Activated naive CD4-positive, alpha-beta T cell treated with anti-CD3 and anti-CD28 coated beads for 36 hours (primary cell): ENCODE measurements at regions of chr9 and their contacts with region 1.

Region 1: GRCh38 chr9:112097712-112098688 is 77.1 kb downstream of the SUSD1 start:
- DNase-seq: peak; percentile 83
- H3K4me3 Mint-ChIP-seq: no peak overlapping the region
- H3K27ac Mint-ChIP-seq: no peak overlapping the region
- H3K4me1 Mint-ChIP-seq: peaks cover 16% of the 10 kb centered on the region
- H3K27me3 Mint-ChIP-seq: no peaks in the 10 kb centered on the region

Region 2: DNA sequence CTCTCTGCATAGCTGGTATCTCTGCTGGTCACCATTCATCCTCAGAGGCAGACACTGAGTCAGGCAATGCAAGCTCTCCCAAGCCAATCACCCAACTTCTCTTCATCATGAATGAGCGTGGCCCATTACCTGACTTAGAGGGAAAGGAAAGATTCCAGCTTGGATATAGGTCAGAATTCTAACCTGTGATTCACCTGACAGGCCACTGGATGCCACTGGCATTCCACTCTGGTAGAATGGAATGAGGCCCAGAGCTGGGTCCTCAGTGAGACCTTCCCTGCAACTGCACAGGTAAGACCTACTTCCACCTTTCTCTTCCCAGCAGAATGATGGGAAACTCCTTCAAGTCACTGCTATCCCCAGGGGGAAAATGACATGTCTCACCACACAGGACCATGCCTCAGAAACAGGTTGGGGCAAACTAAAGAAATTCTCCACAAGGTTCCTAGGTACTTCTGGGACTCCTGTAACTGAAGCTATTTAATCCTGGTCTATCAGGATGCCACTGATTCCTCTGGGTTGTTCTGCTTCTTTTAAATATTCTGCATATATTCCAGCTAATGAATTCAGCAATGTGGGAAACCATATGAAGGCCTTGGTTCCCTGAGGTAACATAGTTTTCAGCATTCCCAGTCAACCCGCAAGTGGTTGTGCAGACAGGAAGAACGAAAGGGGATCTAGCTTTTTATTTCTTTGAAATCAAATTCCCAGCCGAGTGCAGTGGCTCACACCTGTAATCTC is 15.1 kb after region 1 on chr9:
- CTCF ChIA-PET with region 1: interaction called, 14 read pairs
- intact Hi-C with region 1: loop called (anchors 1 kb)
- DNase-seq: peak; percentile 45
- H3K4me3 Mint-ChIP-seq: no peak overlapping the region
- H3K27ac Mint-ChIP-seq: no peak overlapping the region
- H3K4me1 Mint-ChIP-seq: no peaks in the 10 kb centered on the region
- H3K27me3 Mint-ChIP-seq: no peaks in the 10 kb centered on the region

Region 3: DNA sequence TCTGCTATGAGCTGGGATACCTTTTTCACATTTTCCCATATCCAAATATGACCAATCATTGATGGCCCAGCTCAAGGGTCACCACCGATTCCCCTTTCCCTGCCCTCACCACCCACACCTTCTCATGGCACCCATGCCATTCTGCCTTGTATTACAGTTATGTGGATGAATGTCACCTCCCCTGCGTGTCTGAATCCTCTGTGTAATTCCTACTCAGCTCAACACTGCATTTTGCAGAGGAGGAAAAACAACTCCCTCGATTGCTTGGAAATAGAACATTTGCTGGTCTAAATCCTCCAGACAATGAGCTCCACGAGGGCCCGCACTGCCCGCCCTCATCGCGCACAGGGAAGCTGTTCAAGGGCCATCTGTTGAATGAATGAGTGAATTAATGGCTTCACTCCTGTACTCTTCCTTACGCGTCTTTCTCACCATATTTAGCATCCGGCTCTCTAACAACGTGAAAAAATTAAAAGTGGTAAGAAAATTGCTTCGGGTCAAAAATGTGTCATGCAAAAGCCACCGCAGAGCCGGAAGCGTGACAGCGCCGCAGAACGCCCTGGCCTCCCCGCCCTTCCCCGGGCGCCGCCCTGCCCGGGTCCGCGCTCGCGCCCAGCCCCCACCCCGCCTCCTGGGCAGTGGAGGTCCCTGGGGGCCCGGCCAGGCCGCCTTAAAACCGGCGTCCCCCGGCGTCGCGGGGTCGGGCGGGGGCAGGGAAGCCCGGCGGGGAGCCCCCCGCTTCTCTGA is 76.4 kb after region 1 on chr9:
- CTCF ChIA-PET with region 1: interaction called, 4 read pairs
- intact Hi-C with region 1: loop called (anchors 2 kb)
- DNase-seq: peak; percentile 86
- H3K4me3 Mint-ChIP-seq: peak overlapping the region; percentile 82
- H3K27ac Mint-ChIP-seq: peak overlapping the region; percentile 79
- H3K4me1 Mint-ChIP-seq: peaks cover 30% of the 10 kb centered on the region
- H3K27me3 Mint-ChIP-seq: peaks cover 19% of the 10 kb centered on the region

Region 4: DNA sequence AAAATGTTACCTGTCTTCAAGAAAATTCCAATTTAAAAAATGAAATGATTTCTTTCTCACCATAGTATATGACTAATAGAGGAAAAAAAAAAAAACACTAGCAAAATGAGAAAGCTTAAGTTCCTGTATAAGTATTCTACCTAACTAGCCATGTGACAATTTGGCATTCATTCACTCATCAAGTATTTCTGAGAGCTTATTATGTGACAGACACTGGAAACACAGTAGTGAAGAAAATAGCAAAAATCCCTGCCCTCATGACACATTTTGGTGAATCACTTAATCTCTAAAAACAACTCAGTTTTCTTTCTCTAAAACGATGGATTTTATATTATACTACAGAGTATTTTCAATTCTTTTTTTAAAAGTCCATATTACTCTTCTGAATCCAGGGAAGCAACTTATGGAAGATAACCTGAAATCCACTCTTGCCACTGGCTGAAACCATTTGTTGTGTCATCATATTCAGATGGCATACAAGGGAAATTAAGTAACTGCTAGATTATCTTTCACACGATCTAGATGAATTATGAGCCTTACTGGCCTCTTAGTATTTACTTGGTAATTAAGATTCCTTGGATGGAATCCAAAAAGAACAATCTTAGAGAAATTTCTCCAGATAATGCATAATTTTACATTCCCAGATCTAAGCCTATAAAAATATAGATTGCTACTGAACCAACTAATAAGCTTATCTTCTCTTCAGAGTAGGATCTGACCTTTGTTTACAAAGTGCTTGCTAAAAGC is 229.9 kb after region 1 on chr9:
- CTCF ChIA-PET with region 1: interaction called, 11 read pairs
- intact Hi-C with region 1: no loop called
- DNase-seq: no peak
- H3K4me3 Mint-ChIP-seq: no peak overlapping the region
- H3K27ac Mint-ChIP-seq: peak overlapping the region; percentile 50
- H3K4me1 Mint-ChIP-seq: peaks cover 59% of the 10 kb centered on the region
- H3K27me3 Mint-ChIP-seq: no peaks in the 10 kb centered on the region

Region 5: DNA sequence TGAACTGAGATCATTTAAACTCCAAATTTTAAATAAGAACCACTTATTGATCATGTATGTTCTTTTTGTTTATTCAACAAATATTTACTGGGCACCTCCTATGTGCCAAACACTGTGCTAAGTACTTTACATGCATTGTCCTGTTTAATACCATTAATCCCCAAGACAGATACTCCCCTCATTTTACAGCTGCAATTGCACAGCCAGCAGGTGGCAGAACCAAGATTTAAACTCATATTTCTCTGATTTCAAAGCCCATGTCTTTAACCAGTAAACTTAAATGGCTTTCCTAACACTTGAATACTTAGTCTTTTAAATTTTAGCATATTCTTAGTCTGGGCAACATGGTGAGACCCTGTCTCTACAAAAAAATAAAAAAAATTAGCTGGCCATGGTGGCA is 345.2 kb after region 1 on chr9:
- CTCF ChIA-PET with region 1: no interaction called
- intact Hi-C with region 1: no loop called
- DNase-seq: peak; percentile 47
- H3K4me3 Mint-ChIP-seq: no peak overlapping the region
- H3K27ac Mint-ChIP-seq: no peak overlapping the region
- H3K4me1 Mint-ChIP-seq: no peaks in the 10 kb centered on the region
- H3K27me3 Mint-ChIP-seq: no peaks in the 10 kb centered on the region

Region 6: DNA sequence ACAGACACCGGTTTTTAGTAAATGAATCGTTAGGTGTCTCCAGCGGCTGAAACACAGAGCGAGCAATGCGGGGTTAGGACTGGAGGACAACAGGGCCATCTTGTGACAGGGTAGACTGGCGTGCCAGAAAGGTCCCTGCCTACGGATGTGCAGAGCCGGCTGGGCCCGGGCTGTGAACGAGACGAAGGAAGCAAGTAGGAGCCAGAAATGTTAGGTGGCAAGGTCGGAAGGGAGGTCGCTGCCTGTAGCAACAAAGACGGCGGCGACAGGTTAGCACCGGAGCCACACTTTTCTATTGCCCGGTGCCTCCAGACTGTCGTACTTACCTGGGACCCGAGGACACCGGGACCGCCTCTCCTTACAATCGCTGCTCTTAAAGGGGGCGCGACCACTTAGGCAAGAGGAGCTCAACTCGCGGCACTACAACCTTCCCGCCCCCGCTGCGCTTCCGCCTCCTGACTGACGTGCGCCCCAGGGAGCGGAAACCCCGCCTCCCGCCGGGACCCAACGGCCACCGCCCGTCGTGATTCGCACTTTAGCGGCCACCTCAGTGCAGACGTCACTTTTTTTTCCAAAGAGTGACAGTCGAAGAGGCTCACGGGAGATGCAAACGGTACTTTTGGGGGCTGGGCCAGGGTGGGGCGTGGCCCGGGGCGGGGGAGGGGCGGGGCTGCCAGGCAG is 619.8 kb after region 1 on chr9 and contains the start of gene INIP:
- CTCF ChIA-PET with region 1: no interaction called
- intact Hi-C with region 1: loop called (anchors 10 kb)
- DNase-seq: peak; percentile 97
- H3K4me3 Mint-ChIP-seq: peak within 1 kb of the TSS; percentile 97
- H3K27ac Mint-ChIP-seq: peak within 1 kb of the TSS; percentile 94
- H3K4me1 Mint-ChIP-seq: peaks cover 23% of the 10 kb centered on the region
- H3K27me3 Mint-ChIP-seq: no peaks in the 10 kb centered on the region
- total RNA-seq, gene INIP: 31.1 to 33.4 TPM